Naive thymus-derived CD4-positive, alpha-beta T cell (primary cell): ENCODE measurements at regions of chr20 and their contacts with region 1.

Region 1: GRCh38 chr20:41047975-41048305 is 19.3 kb downstream of the TOP1 start:
- DNase-seq: peak in 6 of 9 donors; percentile 23 to 40 (median 29)
- ATAC-seq: peak; percentile 77
- H3K4me3 ChIP-seq: peak overlapping the region; percentile 46
- H3K4me3 Mint-ChIP-seq: peak overlapping the region; percentile 70 to 93 (median 82)
- H3K27ac ChIP-seq: peak overlapping the region; percentile 62
- H3K27ac Mint-ChIP-seq: peak overlapping the region; percentile 74 to 94 (median 84)
- H3K4me1 ChIP-seq: peaks cover 46 to 59% of the 10 kb centered on the region in 2 donors
- H3K4me1 Mint-ChIP-seq: peaks cover 66 to 97% (median 90%) of the 10 kb centered on the region in 7 donors
- H3K27me3 ChIP-seq: no peaks in the 10 kb centered on the region
- H3K27me3 Mint-ChIP-seq: no peaks in the 10 kb centered on the region

Region 2: GRCh38 chr20:40251284-40251932 is 796.5 kb before region 1 on chr20:
- CTCF ChIA-PET with region 1: no interaction called
- POLR2A ChIA-PET with region 1: no interaction called
- intact Hi-C with region 1: no loop called
- DNase-seq: no peak
- ATAC-seq: no peak
- H3K4me3 ChIP-seq: no peak overlapping the region
- H3K4me3 Mint-ChIP-seq: no peak overlapping the region
- H3K27ac ChIP-seq: no peak overlapping the region
- H3K27ac Mint-ChIP-seq: no peak overlapping the region
- H3K4me1 ChIP-seq: no peaks in the 10 kb centered on the region
- H3K4me1 Mint-ChIP-seq: no peaks in the 10 kb centered on the region
- H3K27me3 ChIP-seq: no peaks in the 10 kb centered on the region
- H3K27me3 Mint-ChIP-seq: peaks cover 0 to 14% (median 7%) of the 10 kb centered on the region in 5 donors

Region 3: GRCh38 chr20:40849456-40849855 is 198.5 kb before region 1 on chr20:
- CTCF ChIA-PET with region 1: no interaction called
- POLR2A ChIA-PET with region 1: no interaction called
- intact Hi-C with region 1: no loop called
- DNase-seq: no peak
- ATAC-seq: no peak
- H3K4me3 ChIP-seq: no peak overlapping the region
- H3K4me3 Mint-ChIP-seq: no peak overlapping the region
- H3K27ac ChIP-seq: no peak overlapping the region
- H3K27ac Mint-ChIP-seq: no peak overlapping the region
- H3K4me1 ChIP-seq: no peaks in the 10 kb centered on the region
- H3K4me1 Mint-ChIP-seq: no peaks in the 10 kb centered on the region
- H3K27me3 ChIP-seq: no peaks in the 10 kb centered on the region
- H3K27me3 Mint-ChIP-seq: peaks cover 0 to 1% (median 0%) of the 10 kb centered on the region in 5 donors

Region 4: GRCh38 chr20:41003143-41003883 is 44.6 kb before region 1 on chr20:
- CTCF ChIA-PET with region 1: no interaction called
- POLR2A ChIA-PET with region 1: no interaction called
- intact Hi-C with region 1: loop called in 1 of 2 experiments (anchors 1 kb)
- DNase-seq: peak in 8 of 9 donors; percentile 15 to 73 (median 23)
- ATAC-seq: peak; percentile 85
- H3K4me3 ChIP-seq: peak overlapping the region; percentile 48
- H3K4me3 Mint-ChIP-seq: peak overlapping the region in 8 of 10 donors; percentile 39 to 77 (median 54)
- H3K27ac ChIP-seq: no peak overlapping the region
- H3K27ac Mint-ChIP-seq: peak overlapping the region; percentile 42 to 98 (median 68)
- H3K4me1 ChIP-seq: peaks cover 0 to 11% of the 10 kb centered on the region in 2 donors
- H3K4me1 Mint-ChIP-seq: peaks cover 8 to 41% (median 16%) of the 10 kb centered on the region in 7 donors
- H3K27me3 ChIP-seq: no peaks in the 10 kb centered on the region
- H3K27me3 Mint-ChIP-seq: no peaks in the 10 kb centered on the region

Region 5: GRCh38 chr20:41072190-41072863 is 24.4 kb after region 1 on chr20:
- CTCF ChIA-PET with region 1: no interaction called
- POLR2A ChIA-PET with region 1: interaction called, 4 read pairs
- intact Hi-C with region 1: loop called (anchors 1 to 2 kb)
- DNase-seq: no peak
- ATAC-seq: peak; percentile 22
- H3K4me3 ChIP-seq: no peak overlapping the region
- H3K4me3 Mint-ChIP-seq: peak overlapping the region in 6 of 10 donors; percentile 4 to 58 (median 52)
- H3K27ac ChIP-seq: peak overlapping the region; percentile 24
- H3K27ac Mint-ChIP-seq: peak overlapping the region in 6 of 9 donors; percentile 28 to 87 (median 64)
- H3K4me1 ChIP-seq: peaks cover 14 to 48% of the 10 kb centered on the region in 2 donors
- H3K4me1 Mint-ChIP-seq: peaks cover 49 to 92% (median 84%) of the 10 kb centered on the region in 7 donors
- H3K27me3 ChIP-seq: no peaks in the 10 kb centered on the region
- H3K27me3 Mint-ChIP-seq: no peaks in the 10 kb centered on the region

Region 6: GRCh38 chr20:41086402-41087338 is 38.7 kb after region 1 on chr20:
- CTCF ChIA-PET with region 1: no interaction called
- POLR2A ChIA-PET with region 1: no interaction called
- intact Hi-C with region 1: loop called in 1 of 2 experiments (anchors 5 kb)
- DNase-seq: no peak
- ATAC-seq: peak; percentile 38
- H3K4me3 ChIP-seq: no peak overlapping the region
- H3K4me3 Mint-ChIP-seq: peak overlapping the region in 4 of 10 donors; percentile 2 to 30 (median 17)
- H3K27ac ChIP-seq: peak overlapping the region; percentile 49
- H3K27ac Mint-ChIP-seq: peak overlapping the region; percentile 24 to 82 (median 75)
- H3K4me1 ChIP-seq: peaks cover 0 to 8% of the 10 kb centered on the region in 2 donors
- H3K4me1 Mint-ChIP-seq: peaks cover 12 to 41% (median 34%) of the 10 kb centered on the region in 7 donors
- H3K27me3 ChIP-seq: no peaks in the 10 kb centered on the region
- H3K27me3 Mint-ChIP-seq: no peaks in the 10 kb centered on the region

Region 7: GRCh38 chr20:41149679-41150131 is 101.8 kb after region 1 on chr20:
- CTCF ChIA-PET with region 1: no interaction called
- POLR2A ChIA-PET with region 1: no interaction called
- intact Hi-C with region 1: loop called in 1 of 2 experiments (anchors 5 kb)
- DNase-seq: no peak
- ATAC-seq: no peak
- H3K4me3 ChIP-seq: no peak overlapping the region
- H3K4me3 Mint-ChIP-seq: peak overlapping the region; percentile 30 to 97 (median 70)
- H3K27ac ChIP-seq: peak overlapping the region; percentile 91
- H3K27ac Mint-ChIP-seq: peak overlapping the region; percentile 77 to 100 (median 94)
- H3K4me1 ChIP-seq: peaks cover 96 to 100% of the 10 kb centered on the region in 2 donors
- H3K4me1 Mint-ChIP-seq: peaks cover 80 to 100% (median 94%) of the 10 kb centered on the region in 7 donors
- H3K27me3 ChIP-seq: no peaks in the 10 kb centered on the region
- H3K27me3 Mint-ChIP-seq: no peaks in the 10 kb centered on the region

Region 8: DNA sequence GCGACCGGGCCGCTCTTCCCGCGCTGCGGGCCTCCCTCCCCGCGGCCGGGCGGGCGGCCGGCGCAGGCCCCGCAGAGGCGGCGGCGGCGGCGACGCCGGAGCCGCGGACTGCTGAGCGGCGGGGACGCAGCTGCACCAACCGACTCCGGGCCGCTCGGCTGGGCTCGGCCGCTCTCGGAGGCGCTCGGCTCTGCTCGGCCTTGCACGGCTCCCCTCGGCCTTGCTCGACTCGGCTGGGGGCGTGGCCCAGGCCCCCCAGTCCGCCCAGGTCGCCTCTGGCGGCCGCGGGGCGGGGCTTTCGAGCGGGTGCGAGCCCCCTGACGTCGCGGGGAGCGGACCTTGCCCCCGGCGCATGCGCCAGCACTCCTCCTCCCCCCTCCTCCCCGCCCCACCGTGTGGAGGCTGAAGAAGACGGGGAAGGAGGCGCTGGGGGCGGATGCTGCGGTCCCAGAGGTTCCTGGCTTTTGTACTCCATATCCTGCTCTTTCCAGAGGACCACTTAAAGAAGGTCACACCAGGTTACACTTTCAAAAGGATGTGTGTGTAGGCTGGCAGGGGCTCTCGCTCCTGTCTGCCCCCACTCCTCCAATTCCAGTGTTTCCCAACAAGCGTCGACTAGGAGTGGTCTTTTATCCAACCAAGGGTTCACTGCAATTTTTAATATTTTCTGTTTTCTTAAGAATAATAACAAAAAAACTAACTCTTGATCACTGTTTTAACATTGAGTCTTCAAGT is 269.8 kb after region 1 on chr20 and contains the start of gene ZHX3:
- CTCF ChIA-PET with region 1: no interaction called
- POLR2A ChIA-PET with region 1: no interaction called
- intact Hi-C with region 1: loop called in 1 of 2 experiments (anchors 5 kb)
- DNase-seq: peak; percentile 90 to 97 (median 95)
- ATAC-seq: peak; percentile 99
- H3K4me3 ChIP-seq: peak within 1 kb of the TSS; percentile 47
- H3K4me3 Mint-ChIP-seq: peak within 1 kb of the TSS; percentile 74 to 92 (median 84)
- H3K27ac ChIP-seq: peak within 1 kb of the TSS; percentile 75
- H3K27ac Mint-ChIP-seq: peak within 1 kb of the TSS; percentile 48 to 87 (median 84)
- H3K4me1 ChIP-seq: no peaks in the 10 kb centered on the region
- H3K4me1 Mint-ChIP-seq: peaks cover 11 to 34% (median 28%) of the 10 kb centered on the region in 7 donors
- H3K27me3 ChIP-seq: no peaks in the 10 kb centered on the region
- H3K27me3 Mint-ChIP-seq: peaks cover 0 to 7% (median 0%) of the 10 kb centered on the region in 5 donors
- total RNA-seq, gene ZHX3: 7.9 to 12.8 (median 9.8) TPM

Region 9: DNA sequence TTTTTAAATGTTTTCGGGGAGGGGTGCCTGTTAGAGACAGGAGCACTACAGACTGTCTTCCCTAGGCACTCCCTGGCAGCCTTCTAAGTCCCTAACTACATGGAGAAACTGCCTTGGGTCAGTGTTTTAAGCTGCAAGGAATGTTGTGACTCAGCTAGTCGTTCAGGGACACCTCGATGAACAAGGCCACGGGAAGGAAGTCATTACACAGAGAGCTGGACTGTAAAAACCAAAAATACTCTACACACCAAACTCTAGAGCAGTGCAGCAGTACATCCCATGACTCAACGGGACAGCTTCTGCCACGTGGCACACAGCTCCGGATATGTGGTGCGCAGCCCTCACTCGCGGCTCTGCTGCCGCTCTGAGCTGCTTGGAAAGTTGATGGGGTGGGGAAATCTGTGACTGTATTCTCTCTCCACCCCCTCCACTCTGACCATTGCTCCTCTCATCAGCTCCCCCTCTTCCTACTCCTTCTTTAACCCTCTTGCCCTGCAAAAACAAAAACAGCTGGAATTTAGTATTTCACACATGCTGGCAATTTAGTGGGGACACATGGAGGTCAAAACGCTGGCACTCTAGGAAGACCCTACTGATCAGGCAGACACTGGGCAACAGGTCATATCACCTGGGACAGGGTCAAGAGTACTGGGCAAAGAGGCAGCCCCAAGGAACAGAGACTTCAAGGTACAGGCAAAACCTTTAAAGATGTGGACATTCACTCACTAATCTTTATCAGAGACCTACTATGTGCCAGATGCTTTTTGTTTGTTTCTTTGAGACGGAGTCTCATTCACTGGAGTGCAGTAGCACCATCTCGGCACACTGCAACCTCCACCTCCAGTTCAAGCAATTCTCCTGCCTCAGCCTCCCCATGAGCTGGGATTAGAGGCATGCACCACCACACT is 281.7 kb after region 1 on chr20:
- CTCF ChIA-PET with region 1: no interaction called
- POLR2A ChIA-PET with region 1: no interaction called
- intact Hi-C with region 1: loop called in 1 of 2 experiments (anchors 5 kb)
- DNase-seq: peak; percentile 25 to 57 (median 38)
- ATAC-seq: peak; percentile 98
- H3K4me3 ChIP-seq: no peak overlapping the region
- H3K4me3 Mint-ChIP-seq: peak overlapping the region in 5 of 10 donors; percentile 35 to 64 (median 40)
- H3K27ac ChIP-seq: no peak overlapping the region
- H3K27ac Mint-ChIP-seq: peak overlapping the region in 2 of 9 donors; percentile 37 to 80
- H3K4me1 ChIP-seq: peaks cover 0 to 17% of the 10 kb centered on the region in 2 donors
- H3K4me1 Mint-ChIP-seq: peaks cover 5 to 19% (median 14%) of the 10 kb centered on the region in 7 donors
- H3K27me3 ChIP-seq: no peaks in the 10 kb centered on the region
- H3K27me3 Mint-ChIP-seq: peaks cover 0 to 4% (median 0%) of the 10 kb centered on the region in 5 donors